ENCODE measurements at regions of chr10 and their contacts with region 1.

Region 1: GRCh38 chr10:43648398-43649184 is at the start of gene ZNF32:
- DNase-seq: peak; percentile 88 to 94
- H3K4me3 ChIP-seq: peak within 1 kb of the TSS; percentile 81
- H3K4me3 Mint-ChIP-seq: peak within 1 kb of the TSS; percentile 89
- H3K27ac Mint-ChIP-seq: peak within 1 kb of the TSS; percentile 65
- H3K4me1 ChIP-seq: 0 out of 2 replicates have a peak, but pooled peaks cover 4% of the 10 kb centered on the region
- H3K4me1 Mint-ChIP-seq: no peaks in the 10 kb centered on the region
- H3K27me3 ChIP-seq: no peaks in the 10 kb centered on the region; the same call in 1 of the 2 replicates
- H3K27me3 Mint-ChIP-seq: peaks cover 3% of the 10 kb centered on the region
- CTCF ChIP-seq: no peak
- total RNA-seq, gene ZNF32: 25.3 and 30.3 TPM in 2 replicates

Region 2: DNA sequence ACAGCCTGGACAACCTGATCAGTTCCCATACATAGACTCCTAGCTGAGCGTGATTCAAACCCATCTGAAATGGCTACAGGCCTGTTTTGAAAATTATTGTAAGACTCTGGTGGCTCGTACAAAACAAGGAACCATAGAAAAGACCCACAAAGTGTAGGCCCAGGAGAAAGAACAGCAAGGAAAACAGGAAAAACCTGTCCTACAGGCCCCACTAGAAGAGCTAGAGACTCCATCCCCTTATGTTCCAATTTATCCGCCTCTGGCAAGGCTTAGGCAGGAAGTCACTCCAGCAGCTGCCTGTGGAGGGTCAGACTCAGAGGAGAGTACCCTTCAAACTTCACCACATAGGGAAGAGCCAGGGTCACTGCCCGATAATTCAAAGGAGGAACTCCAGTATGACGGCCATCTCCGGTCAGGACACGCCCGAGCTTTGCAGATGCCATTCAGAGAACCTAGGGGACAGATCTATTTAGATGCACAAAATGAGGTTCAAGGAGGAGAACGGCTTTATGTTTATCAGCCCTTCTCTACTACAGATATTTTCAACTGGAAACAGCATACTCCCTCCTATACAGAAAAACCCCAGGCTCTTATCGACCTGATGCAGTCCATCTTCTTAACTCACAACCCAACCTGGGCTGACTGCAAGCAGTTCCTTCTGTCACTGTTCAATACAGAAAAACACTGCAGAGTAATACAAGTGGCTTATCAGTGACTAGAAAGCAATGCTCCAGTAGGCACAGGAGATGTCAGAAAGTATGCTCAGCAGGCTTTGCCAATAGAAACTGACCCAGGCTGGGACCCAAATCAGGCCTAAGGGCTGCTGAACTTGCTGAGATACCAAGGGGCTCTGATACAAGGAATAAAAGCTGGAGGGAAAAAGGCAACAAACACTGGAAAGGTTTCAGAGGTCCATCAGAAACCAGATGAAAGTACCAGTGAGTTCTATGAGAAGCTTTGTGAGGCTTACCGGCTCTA is 1001.6 kb before region 1 on chr10:
- CTCF ChIA-PET with region 1: no interaction called
- POLR2A ChIA-PET with region 1: no interaction called
- intact Hi-C with region 1: loop called (anchors 5 kb)
- DNase-seq: peak in 1 of 2 experiments; percentile 49
- H3K4me3 ChIP-seq: no peak overlapping the region
- H3K4me3 Mint-ChIP-seq: no peak overlapping the region
- H3K27ac Mint-ChIP-seq: no peak overlapping the region
- H3K4me1 ChIP-seq: peaks cover 47% of the 10 kb centered on the region
- H3K4me1 Mint-ChIP-seq: peaks cover 44% of the 10 kb centered on the region
- H3K27me3 ChIP-seq: no peaks in the 10 kb centered on the region
- H3K27me3 Mint-ChIP-seq: no peaks in the 10 kb centered on the region
- CTCF ChIP-seq: no peak

Region 3: DNA sequence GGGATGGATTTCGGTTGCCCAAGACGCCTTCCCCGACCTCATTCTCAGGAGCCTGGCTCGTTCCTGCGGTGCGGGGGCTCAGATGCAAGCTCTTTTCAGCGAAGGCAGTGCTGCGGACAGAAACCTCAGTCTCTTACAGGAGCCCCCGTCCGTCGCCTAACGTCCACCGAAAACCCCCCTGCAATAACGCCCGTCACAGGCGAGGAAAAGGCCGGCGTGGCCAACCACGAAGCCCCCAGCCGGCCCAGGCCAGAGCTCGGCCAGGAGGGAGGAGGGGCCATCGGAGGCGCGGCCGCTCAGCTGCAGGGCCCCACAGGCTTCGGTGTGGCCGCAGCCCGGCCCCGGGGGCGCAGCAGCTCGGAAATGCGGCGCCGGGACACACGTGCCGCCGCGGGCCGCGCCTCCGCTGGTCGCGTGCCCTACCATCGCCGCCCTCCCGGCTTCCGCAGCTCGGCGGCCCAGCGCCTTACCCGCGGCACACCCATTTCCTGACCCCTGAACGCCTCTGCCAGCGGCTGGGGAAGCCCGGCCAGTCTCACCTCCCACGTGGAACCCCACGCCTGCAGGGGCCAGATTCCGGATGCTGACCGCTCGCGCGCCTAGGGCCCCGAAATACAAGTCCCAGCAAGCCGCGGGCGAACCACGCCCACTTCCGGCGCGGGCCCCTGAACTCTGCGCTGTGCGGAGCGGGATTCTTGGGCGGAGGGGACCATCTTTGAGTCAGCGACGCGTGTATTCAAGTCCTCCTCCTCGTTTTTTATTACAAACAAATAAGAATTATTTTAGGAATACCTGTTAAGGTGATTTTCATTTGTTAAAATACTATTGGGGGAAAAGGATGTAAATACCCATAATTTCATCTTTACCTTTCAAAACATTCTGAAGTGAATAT is 74.3 kb before region 1 on chr10 and contains the start of gene ZNF239:
- CTCF ChIA-PET with region 1: no interaction called
- POLR2A ChIA-PET with region 1: no interaction called
- intact Hi-C with region 1: loop called (anchors 1 kb)
- DNase-seq: peak; percentile 95
- H3K4me3 ChIP-seq: peak within 1 kb of the TSS; percentile 85
- H3K4me3 Mint-ChIP-seq: peak within 1 kb of the TSS; percentile 90
- H3K27ac Mint-ChIP-seq: peak within 1 kb of the TSS; percentile 79
- H3K4me1 ChIP-seq: peaks cover 12% of the 10 kb centered on the region; the same call in 1 of the 2 replicates
- H3K4me1 Mint-ChIP-seq: peaks cover 21% of the 10 kb centered on the region
- H3K27me3 ChIP-seq: no peaks in the 10 kb centered on the region
- H3K27me3 Mint-ChIP-seq: no peaks in the 10 kb centered on the region
- CTCF ChIP-seq: no peak
- total RNA-seq, gene ZNF239: 15.2 and 16.4 TPM in 2 replicates

Region 4: GRCh38 chr10:43606322-43607198 is 42.0 kb before region 1 on chr10 and contains the start of gene ZNF485:
- CTCF ChIA-PET with region 1: no interaction called
- POLR2A ChIA-PET with region 1: no interaction called
- intact Hi-C with region 1: loop called (anchors 2 kb)
- DNase-seq: peak; percentile 82 to 84
- H3K4me3 ChIP-seq: peak within 1 kb of the TSS; percentile 62
- H3K4me3 Mint-ChIP-seq: peak within 1 kb of the TSS; percentile 82
- H3K27ac Mint-ChIP-seq: peak within 1 kb of the TSS; percentile 52
- H3K4me1 ChIP-seq: peaks cover 4% of the 10 kb centered on the region; the same call in 1 of the 2 replicates
- H3K4me1 Mint-ChIP-seq: peaks cover 8% of the 10 kb centered on the region
- H3K27me3 ChIP-seq: no peaks in the 10 kb centered on the region
- H3K27me3 Mint-ChIP-seq: peaks cover 7% of the 10 kb centered on the region
- CTCF ChIP-seq: no peak
- total RNA-seq, gene ZNF485: 7.3 and 8.6 TPM in 2 replicates

Measured in Caco-2 (cell line).